Stomach (tissue), 19 donors: ENCODE measurements at regions of chr16 and their contacts with region 1.

Region 1: GRCh38 chr16:68790130-68790761 is 53.1 kb upstream of the TANGO6 start:
- DNase-seq: peak; percentile 65 to 84
- H3K4me3 ChIP-seq: no peak overlapping the region
- H3K27ac ChIP-seq: peak overlapping the region; percentile 39 to 81 (median 73)
- H3K4me1 ChIP-seq: peaks cover 40 to 71% (median 52%) of the 10 kb centered on the region in 4 donors
- H3K27me3 ChIP-seq: no peaks in the 10 kb centered on the region
- CTCF ChIP-seq: no peak
- EP300 ChIP-seq: no peak
- POLR2A ChIP-seq: no peak

Region 2: DNA sequence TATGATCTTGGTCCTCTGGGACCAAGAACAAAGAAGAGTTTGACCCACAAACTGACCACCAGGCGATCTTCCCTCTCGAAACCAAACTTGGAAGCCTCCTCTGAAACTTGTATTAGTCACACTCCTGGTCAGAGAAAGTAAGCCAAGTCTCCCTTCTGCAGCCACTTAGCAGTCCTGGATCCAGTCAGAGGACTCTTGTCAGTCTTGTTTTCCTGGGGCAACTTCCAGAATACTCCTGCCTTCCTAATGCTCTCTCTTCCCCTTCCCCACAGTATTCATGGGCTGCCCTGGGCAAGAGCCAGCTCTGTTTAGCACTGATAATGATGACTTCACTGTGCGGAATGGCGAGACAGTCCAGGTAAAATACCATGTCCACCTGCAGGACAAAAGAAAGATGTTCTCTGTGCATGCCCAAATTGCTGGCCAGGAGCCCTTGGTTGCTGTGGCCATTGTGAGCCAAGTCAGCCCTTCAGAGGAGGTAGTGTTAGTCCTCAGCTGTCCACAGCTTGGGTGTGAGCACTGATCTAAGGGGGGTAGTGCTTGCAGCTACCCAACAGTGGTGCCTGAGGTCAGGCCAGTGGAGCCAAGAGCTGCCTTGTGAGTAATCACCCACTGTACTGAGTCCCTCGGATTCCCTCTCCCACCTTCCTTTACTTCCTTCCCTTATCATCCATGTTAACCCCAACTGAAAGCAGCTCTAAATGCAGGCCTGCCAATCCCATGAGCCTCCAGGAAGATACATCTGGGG is 114.0 kb before region 1 on chr16:
- intact Hi-C with region 1: no loop called
- DNase-seq: no peak
- H3K4me3 ChIP-seq: no peak overlapping the region
- H3K27ac ChIP-seq: no peak overlapping the region
- H3K4me1 ChIP-seq: no peaks in the 10 kb centered on the region
- H3K27me3 ChIP-seq: no peaks in the 10 kb centered on the region
- CTCF ChIP-seq: no peak
- EP300 ChIP-seq: no peak
- POLR2A ChIP-seq: no peak

Region 3: GRCh38 chr16:68744369-68745280 is 45.6 kb before region 1 on chr16:
- intact Hi-C with region 1: loop called (anchors 10 kb)
- DNase-seq: peak; percentile 89 to 96
- H3K4me3 ChIP-seq: peak overlapping the region in 2 of 4 donors; percentile 13 to 15
- H3K27ac ChIP-seq: peak overlapping the region; percentile 89 to 91 (median 91)
- H3K4me1 ChIP-seq: peaks cover 41 to 79% (median 58%) of the 10 kb centered on the region in 4 donors
- H3K27me3 ChIP-seq: no peaks in the 10 kb centered on the region
- CTCF ChIP-seq: no peak
- EP300 ChIP-seq: no peak
- POLR2A ChIP-seq: no peak